ENCODE measurements at regions of chr1 and their contacts with region 1.

Region 1: GRCh38 chr1:52404116-52404986 is at the starts of genes ORC1 and PRPF38A:
- DNase-seq: peak; percentile 90 to 94
- H3K4me3 ChIP-seq: peak within 1 kb of the TSS; percentile 78
- H3K27ac ChIP-seq: peak within 1 kb of the TSS; percentile 83
- H3K4me1 ChIP-seq: peaks cover 22% of the 10 kb centered on the region
- H3K27me3 ChIP-seq: no peaks in the 10 kb centered on the region
- CTCF ChIP-seq: peak; percentile 61
- total RNA-seq, gene ORC1: 17.6 and 21.2 TPM in 2 replicates
- total RNA-seq, gene PRPF38A: 57.2 and 59.2 TPM in 2 replicates

Region 2: DNA sequence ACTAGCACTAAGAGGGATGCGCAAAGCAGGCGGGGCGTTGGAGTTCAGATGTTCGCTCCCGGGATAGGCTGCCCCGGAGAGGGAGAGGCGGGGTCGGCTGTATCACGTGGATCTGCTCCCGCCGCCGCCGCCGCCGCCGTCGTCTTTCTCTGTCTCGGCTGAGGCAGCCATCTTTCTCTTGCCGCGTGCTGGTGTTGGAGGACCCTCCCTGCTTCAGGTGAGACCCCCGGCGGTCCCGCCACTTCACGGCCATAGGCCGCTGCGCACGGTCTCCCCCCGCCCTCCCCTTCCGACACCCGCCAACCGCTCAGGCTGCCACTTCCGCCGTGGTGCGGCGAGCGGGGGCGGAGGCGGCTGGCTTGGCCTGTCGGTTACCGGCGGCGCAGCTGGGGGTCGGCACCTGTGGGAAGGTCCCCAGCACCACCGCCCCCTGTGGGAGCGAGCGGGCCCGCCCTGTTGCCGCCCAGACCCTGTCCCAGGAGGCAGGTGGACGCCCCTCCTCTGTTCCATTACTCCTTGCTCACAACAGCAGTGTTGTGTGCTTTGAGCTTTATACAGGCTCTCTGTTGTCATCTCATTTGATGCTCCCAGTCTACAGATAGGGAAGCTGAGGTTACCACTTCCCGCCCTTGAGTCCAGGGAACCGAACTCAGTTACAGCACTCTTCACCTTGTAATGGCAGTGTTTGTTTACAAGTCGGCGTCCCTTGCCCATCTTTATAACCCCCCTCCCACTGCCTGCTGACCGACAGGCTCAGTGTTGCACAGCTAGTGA is 348.0 kb before region 1 on chr1 and contains the start of gene BTF3L4:
- CTCF ChIA-PET with region 1: no interaction called
- POLR2A ChIA-PET with region 1: interaction called, 5 read pairs
- intact Hi-C with region 1: loop called (anchors 1 kb)
- DNase-seq: peak; percentile 89 to 94
- H3K4me3 ChIP-seq: peak within 1 kb of the TSS; percentile 95
- H3K27ac ChIP-seq: peak within 1 kb of the TSS; percentile 93
- H3K4me1 ChIP-seq: peaks cover 39% of the 10 kb centered on the region
- H3K27me3 ChIP-seq: no peaks in the 10 kb centered on the region
- CTCF ChIP-seq: no peak
- total RNA-seq, gene BTF3L4: 47.0 and 48.6 TPM in 2 replicates

Region 3: DNA sequence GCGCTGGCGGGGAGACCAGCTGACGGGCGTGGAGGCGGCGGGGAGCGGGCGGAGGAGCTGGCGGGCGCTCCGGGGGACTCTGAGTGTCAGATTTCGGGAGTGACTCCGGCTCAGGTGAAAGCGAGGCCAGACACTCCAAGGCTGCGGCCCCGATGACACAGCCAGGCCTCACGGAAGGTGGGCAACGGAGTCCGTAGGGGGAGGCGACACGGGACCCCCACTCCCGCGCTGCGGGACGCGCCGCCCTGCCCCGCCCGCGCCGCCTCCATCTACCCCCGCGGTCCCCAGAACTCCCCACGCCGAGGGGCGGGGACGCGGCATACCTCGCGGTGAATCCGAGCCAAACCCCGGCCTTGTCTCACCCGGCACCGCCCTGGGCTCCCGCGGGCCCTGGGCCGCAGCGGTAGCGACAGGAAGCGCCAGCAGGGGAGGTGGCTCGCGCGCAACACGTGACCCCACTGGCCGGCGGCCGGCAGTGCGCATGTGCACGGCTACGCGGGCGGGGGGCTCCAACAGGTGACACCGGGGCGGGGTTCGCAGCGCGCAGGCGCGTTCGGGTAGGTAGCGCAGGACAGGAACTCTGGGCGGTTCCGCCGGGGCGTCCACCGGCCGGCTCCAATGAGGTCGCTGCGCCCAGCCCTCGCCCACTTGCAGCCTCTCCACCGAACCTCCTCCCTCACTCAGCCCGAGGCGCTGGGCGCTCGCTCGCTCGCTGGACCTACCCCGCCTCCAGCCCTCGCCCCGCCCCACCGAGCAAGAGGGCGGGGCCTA is 38.4 kb before region 1 on chr1 and contains the start of gene CC2D1B:
- CTCF ChIA-PET with region 1: no interaction called
- POLR2A ChIA-PET with region 1: interaction called, 21 read pairs
- intact Hi-C with region 1: loop called (anchors 1 kb)
- DNase-seq: peak; percentile 94 to 100
- H3K4me3 ChIP-seq: peak within 1 kb of the TSS; percentile 92
- H3K27ac ChIP-seq: peak within 1 kb of the TSS; percentile 86
- H3K4me1 ChIP-seq: peaks cover 15% of the 10 kb centered on the region
- H3K27me3 ChIP-seq: no peaks in the 10 kb centered on the region
- CTCF ChIP-seq: no peak
- total RNA-seq, gene CC2D1B: 33.4 and 38.8 TPM in 2 replicates

Region 4: DNA sequence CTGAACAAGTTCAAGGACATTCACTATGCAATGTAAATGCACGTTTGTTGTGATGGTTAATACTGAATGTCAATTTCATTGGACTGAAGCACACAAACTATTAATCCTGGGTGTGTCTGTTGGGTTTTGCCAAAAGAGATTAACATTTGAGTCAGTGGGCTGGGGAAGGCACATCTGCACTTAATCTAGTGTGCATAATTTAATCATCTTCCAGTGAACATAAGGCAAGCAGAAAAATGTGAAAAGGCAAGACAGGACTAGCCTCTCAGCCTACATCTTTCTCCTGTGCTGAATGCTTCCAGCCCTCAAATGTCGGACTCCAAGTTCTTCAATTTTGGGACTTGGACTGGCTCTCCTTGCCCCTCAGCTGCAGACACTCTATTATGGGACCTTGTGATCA is 40.1 kb after region 1 on chr1:
- CTCF ChIA-PET with region 1: no interaction called
- POLR2A ChIA-PET with region 1: no interaction called
- intact Hi-C with region 1: no loop called
- DNase-seq: no peak
- H3K4me3 ChIP-seq: no peak overlapping the region
- H3K27ac ChIP-seq: no peak overlapping the region
- H3K4me1 ChIP-seq: no peaks in the 10 kb centered on the region
- H3K27me3 ChIP-seq: no peaks in the 10 kb centered on the region
- CTCF ChIP-seq: no peak

Region 5: GRCh38 chr1:52669696-52670095 is 265.3 kb after region 1 on chr1:
- CTCF ChIA-PET with region 1: interaction called, 14 read pairs
- POLR2A ChIA-PET with region 1: no interaction called
- intact Hi-C with region 1: no loop called
- DNase-seq: no peak
- H3K4me3 ChIP-seq: no peak overlapping the region
- H3K27ac ChIP-seq: no peak overlapping the region
- H3K4me1 ChIP-seq: peaks cover 19% of the 10 kb centered on the region
- H3K27me3 ChIP-seq: no peaks in the 10 kb centered on the region
- CTCF ChIP-seq: no peak

Region 6: DNA sequence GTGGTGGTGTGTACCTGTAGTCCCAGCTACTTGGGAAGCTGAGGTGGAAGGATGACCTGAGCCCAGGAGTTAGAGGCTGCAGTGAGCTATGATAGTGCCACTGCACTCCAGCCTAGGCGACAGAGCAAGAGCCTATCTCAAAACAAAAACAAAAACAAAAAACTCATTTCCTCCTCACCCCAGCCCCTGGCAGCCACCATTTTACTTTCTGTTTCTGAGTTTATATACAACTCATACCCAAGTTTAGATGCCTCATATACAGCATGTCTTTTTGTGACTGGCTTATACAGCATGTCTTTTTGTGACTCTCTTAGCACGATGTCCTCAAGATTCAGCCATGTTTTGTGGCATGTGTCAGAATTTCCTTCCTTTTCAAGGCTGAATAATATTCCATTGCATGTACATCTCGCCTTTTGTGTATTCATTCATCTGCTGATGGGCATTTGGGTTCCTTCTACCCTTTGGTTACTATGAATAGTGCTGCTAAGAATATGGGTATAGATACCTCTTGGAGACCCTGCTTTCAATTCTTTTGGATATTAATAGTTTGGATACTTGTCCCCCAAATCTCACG is 279.1 kb after region 1 on chr1:
- CTCF ChIA-PET with region 1: no interaction called
- POLR2A ChIA-PET with region 1: no interaction called
- intact Hi-C with region 1: loop called (anchors 1 kb)
- DNase-seq: no peak
- H3K4me3 ChIP-seq: no peak overlapping the region
- H3K27ac ChIP-seq: no peak overlapping the region
- H3K4me1 ChIP-seq: no peaks in the 10 kb centered on the region
- H3K27me3 ChIP-seq: no peaks in the 10 kb centered on the region
- CTCF ChIP-seq: no peak

Region 7: GRCh38 chr1:53196485-53197270 is 792.3 kb after region 1 on chr1 and contains the start of gene CPT2:
- CTCF ChIA-PET with region 1: no interaction called
- POLR2A ChIA-PET with region 1: no interaction called
- intact Hi-C with region 1: loop called (anchors 5 kb)
- DNase-seq: peak; percentile 77 to 92
- H3K4me3 ChIP-seq: peak within 1 kb of the TSS; percentile 74
- H3K27ac ChIP-seq: peak within 1 kb of the TSS; percentile 64
- H3K4me1 ChIP-seq: peaks cover 29% of the 10 kb centered on the region
- H3K27me3 ChIP-seq: no peaks in the 10 kb centered on the region
- CTCF ChIP-seq: 0 out of 2 replicates have a peak, but pooled peaks have one; percentile 16
- total RNA-seq, gene CPT2: 32.2 and 35.7 TPM in 2 replicates

Measured in PC-9 (cell line).